ENCODE measurements at regions of chr4 and their contacts with region 1.

Region 1: GRCh38 chr4:88341227-88342192 is 37.1 kb upstream of the HERC6 start:
- DNase-seq: peak; percentile 76
- ATAC-seq: peak; percentile 99
- H3K4me3 ChIP-seq: no peak overlapping the region
- H3K27ac ChIP-seq: peak overlapping the region; percentile 93
- H3K4me1 ChIP-seq: peaks cover 25% of the 10 kb centered on the region
- H3K27me3 ChIP-seq: no peaks in the 10 kb centered on the region
- CTCF ChIP-seq: no peak

Region 2: DNA sequence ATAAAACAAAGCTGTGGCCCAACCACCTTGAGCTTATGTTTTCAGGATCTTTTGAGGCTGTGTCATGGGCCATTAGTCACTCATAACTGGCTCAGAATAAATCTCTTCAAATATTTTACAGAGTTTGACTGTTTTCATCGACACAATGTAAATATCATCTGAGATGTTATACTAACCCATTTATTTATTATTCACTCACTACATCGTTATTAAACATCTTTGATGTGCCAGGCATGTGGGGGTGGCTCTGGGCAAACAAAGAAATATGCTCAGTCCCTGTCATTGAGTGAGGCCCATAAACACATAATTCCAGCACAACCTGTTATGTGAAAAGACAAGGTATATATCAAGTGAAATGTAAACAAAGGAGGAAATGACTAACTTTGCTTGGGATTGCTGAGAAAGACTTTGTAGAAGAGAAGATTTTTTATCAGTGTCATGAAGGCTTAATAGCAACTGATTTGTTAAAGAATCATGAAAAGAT is 22.6 kb before region 1 on chr4:
- CTCF ChIA-PET with region 1: no interaction called
- POLR2A ChIA-PET with region 1: no interaction called
- intact Hi-C with region 1: loop called (anchors 2 kb)
- DNase-seq: peak; percentile 93
- ATAC-seq: peak; percentile 82
- H3K4me3 ChIP-seq: peak overlapping the region; percentile 32; the same call in 1 of the 2 replicates
- H3K27ac ChIP-seq: peak overlapping the region; percentile 93
- H3K4me1 ChIP-seq: peaks cover 34% of the 10 kb centered on the region
- H3K27me3 ChIP-seq: no peaks in the 10 kb centered on the region
- CTCF ChIP-seq: no peak

Region 3: DNA sequence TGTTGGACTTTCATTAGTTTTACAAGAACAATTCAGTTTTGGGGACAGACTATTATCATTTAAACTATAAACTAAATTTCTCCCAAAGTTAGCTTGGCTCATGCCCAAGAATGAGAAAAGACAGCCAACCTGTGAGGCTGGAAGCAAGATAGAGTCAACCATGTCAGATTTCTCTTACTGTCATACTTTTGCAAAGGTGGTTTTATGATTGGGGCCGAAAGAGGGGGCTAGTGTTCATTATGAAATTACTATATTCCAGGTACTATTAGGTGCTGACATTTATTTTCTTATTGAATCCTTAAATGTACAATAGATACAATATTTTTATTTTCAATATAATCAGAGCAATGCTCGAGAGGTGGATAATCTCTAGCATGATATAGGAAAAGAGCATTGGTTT is 67.7 kb after region 1 on chr4:
- CTCF ChIA-PET with region 1: no interaction called
- POLR2A ChIA-PET with region 1: no interaction called
- intact Hi-C with region 1: no loop called
- DNase-seq: no peak
- ATAC-seq: no peak
- H3K4me3 ChIP-seq: no peak overlapping the region
- H3K27ac ChIP-seq: no peak overlapping the region
- H3K4me1 ChIP-seq: no peaks in the 10 kb centered on the region
- H3K27me3 ChIP-seq: no peaks in the 10 kb centered on the region
- CTCF ChIP-seq: no peak; the same call in 1 of the 2 replicates

Measured in PC-3 (cell line).